ENCODE measurements at regions of chr13 and their contacts with region 1.

Region 1: GRCh38 chr13:113086031-113086750 is 19.4 kb upstream of the F7 start:
- DNase-seq: peak; percentile 68
- ATAC-seq: peak; percentile 43
- H3K4me3 Mint-ChIP-seq: no peak overlapping the region
- H3K27ac Mint-ChIP-seq: no peak overlapping the region
- H3K4me1 Mint-ChIP-seq: peaks cover 14% of the 10 kb centered on the region
- H3K27me3 Mint-ChIP-seq: no peaks in the 10 kb centered on the region
- CTCF ChIP-seq: no peak

Region 2: DNA sequence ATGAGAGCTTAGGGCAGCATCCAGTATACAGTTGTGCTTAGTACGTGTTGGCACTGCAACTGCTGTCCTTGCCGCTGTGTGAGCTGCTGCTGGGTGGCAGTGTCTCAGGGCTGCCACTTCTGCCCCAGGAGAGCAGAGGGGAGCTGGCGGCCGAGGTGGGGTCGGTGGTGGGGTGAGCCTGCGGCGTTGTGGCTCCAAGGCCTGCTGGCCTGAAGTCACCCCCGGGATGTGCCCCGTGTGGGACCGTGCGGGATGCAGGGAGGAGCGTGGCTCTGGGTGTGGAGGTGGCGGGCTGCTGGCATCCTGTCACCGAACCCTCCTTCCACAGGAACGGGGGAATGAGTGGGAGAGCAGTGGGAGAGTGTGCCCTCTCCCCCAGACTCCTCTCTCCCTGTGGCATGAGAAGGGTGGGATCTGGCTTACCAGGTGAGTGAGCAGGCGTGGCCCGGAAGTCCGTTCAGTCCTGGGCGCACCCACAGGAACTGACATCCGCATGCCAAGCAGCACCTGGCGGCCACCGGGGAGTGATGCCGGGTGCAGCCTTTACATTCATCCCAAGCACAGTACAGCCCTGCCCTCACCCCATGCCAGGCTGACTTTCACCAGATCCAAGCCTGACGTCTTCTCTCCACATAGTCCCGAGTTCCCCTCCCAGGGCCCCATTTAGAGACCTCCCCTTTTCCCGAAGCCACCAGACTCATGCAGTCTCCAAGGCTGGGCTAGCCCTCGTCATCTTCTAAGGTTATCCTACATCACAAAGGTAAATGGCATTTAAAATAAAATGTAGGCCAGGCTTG is 90.6 kb before region 1 on chr13:
- CTCF ChIA-PET with region 1: no interaction called
- POLR2A ChIA-PET with region 1: no interaction called
- DNase-seq: no peak
- ATAC-seq: no peak
- H3K4me3 Mint-ChIP-seq: no peak overlapping the region
- H3K27ac Mint-ChIP-seq: peak overlapping the region; percentile 5
- H3K4me1 Mint-ChIP-seq: 0 out of 2 replicates have a peak, but pooled peaks cover 2% of the 10 kb centered on the region
- H3K27me3 Mint-ChIP-seq: no peaks in the 10 kb centered on the region
- CTCF ChIP-seq: no peak

Region 3: DNA sequence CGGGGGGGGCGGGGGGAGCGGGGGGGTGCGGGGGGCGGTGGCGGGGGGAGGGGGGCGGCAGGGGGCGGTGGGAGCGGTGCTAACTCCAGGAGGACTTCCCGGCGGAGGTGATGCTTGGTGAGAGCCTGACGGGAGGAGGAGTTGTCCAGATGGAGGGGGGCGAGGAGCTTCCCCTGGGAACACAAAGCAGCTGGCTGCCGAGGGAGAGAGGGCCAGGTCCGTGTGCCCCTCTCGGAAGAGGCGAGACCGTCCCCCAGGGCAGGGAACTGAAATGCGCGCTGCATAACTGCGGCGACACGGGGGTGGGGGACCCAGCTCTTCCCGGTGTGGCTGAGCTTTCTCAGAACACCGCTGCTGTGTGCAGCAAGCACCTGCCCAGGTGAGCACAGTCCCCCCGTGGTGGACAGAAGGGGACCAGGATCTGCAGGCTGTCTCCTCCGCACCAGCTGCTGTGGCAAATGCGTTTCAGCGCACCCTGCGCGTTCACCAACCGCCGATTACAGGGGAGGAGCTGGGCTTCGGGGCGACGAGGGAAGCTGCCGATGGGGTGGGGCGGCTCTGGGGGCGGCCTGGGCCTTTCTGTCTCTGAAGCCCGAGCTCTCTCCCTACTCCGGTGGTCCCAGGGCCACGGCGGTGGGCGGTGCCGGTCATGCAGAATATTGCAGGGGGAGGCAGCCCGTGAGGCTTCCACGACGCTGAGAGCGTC is 35.3 kb before region 1 on chr13:
- CTCF ChIA-PET with region 1: interaction called, 13 read pairs
- POLR2A ChIA-PET with region 1: no interaction called
- DNase-seq: no peak
- ATAC-seq: peak; percentile 53
- H3K4me3 Mint-ChIP-seq: peak overlapping the region; percentile 52
- H3K27ac Mint-ChIP-seq: no peak overlapping the region
- H3K4me1 Mint-ChIP-seq: peaks cover 13% of the 10 kb centered on the region
- H3K27me3 Mint-ChIP-seq: no peaks in the 10 kb centered on the region; the same call in 1 of the 2 replicates
- CTCF ChIP-seq: no peak

Region 4: DNA sequence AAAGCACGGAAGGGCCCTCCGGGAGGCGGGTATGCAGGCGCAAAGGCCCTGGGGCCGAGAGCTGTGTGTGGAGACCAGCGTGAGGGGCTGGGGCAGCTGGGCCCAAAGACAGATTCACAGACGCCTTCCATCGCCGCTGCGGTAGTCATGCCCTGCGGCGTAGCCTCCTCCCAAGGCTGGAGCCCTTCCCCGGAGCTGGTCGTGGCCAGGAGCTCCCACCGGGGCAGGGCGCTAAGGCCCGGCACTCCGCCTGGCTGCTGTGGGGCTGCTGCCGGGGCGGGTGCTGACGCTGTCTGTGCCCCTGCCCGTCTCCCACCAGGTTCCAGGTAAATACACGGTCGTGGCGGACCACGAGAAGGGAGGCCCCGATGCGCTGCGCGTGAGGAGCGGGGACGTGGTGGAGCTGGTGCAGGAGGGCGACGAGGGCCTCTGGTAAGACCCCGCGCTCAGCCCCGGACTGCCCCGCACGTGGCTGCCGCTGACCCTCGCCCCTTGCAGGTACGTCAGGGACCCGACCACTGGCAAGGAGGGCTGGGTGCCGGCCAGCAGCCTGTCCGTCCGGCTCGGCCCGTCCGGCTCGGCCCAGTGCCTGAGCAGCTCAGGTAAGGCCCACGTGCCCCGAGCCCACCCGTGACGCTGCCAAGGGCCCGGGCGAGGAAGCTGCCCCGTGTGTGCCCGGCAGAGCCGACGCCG is 10.0 kb after region 1 on chr13:
- CTCF ChIA-PET with region 1: interaction called, 10 read pairs
- POLR2A ChIA-PET with region 1: no interaction called
- DNase-seq: no peak
- ATAC-seq: no peak
- H3K4me3 Mint-ChIP-seq: no peak overlapping the region
- H3K27ac Mint-ChIP-seq: no peak overlapping the region
- H3K4me1 Mint-ChIP-seq: peaks cover 3% of the 10 kb centered on the region; the same call in 1 of the 2 replicates
- H3K27me3 Mint-ChIP-seq: no peaks in the 10 kb centered on the region
- CTCF ChIP-seq: no peak

Region 5: GRCh38 chr13:113122550-113123225 is 36.5 kb after region 1 on chr13 and contains the start of gene F10:
- CTCF ChIA-PET with region 1: interaction called, 14 read pairs
- POLR2A ChIA-PET with region 1: no interaction called
- DNase-seq: peak; percentile 54
- ATAC-seq: peak; percentile 96
- H3K4me3 Mint-ChIP-seq: no peak within 1 kb of the TSS; the same call in 1 of the 2 replicates
- H3K27ac Mint-ChIP-seq: no peak within 1 kb of the TSS
- H3K4me1 Mint-ChIP-seq: peaks cover 9% of the 10 kb centered on the region
- H3K27me3 Mint-ChIP-seq: no peaks in the 10 kb centered on the region; the same call in 1 of the 2 replicates
- CTCF ChIP-seq: no peak
- total RNA-seq, gene F10: 0.87 to 2.8 TPM (median 2.6 TPM) in 3 replicates

Region 6: GRCh38 chr13:113205428-113205931 is 119.3 kb after region 1 on chr13:
- CTCF ChIA-PET with region 1: no interaction called
- POLR2A ChIA-PET with region 1: no interaction called
- DNase-seq: no peak
- ATAC-seq: no peak
- H3K4me3 Mint-ChIP-seq: no peak overlapping the region
- H3K27ac Mint-ChIP-seq: peak overlapping the region; percentile 6; the same call in 1 of the 2 replicates
- H3K4me1 Mint-ChIP-seq: peaks cover 30% of the 10 kb centered on the region
- H3K27me3 Mint-ChIP-seq: no peaks in the 10 kb centered on the region
- CTCF ChIP-seq: no peak

Region 7: GRCh38 chr13:113291949-113292862 is 206.0 kb after region 1 on chr13:
- CTCF ChIA-PET with region 1: no interaction called
- POLR2A ChIA-PET with region 1: no interaction called
- DNase-seq: no peak
- ATAC-seq: peak; percentile 53
- H3K4me3 Mint-ChIP-seq: peak overlapping the region; percentile 23
- H3K27ac Mint-ChIP-seq: no peak overlapping the region
- H3K4me1 Mint-ChIP-seq: peaks cover 19% of the 10 kb centered on the region
- H3K27me3 Mint-ChIP-seq: peaks cover 67% of the 10 kb centered on the region
- CTCF ChIP-seq: no peak

Measured in WTC11 (cell line).